Adrenal gland (tissue), 19 donors: ENCODE measurements at regions of chr3 and their contacts with region 1.

Region 1: DNA sequence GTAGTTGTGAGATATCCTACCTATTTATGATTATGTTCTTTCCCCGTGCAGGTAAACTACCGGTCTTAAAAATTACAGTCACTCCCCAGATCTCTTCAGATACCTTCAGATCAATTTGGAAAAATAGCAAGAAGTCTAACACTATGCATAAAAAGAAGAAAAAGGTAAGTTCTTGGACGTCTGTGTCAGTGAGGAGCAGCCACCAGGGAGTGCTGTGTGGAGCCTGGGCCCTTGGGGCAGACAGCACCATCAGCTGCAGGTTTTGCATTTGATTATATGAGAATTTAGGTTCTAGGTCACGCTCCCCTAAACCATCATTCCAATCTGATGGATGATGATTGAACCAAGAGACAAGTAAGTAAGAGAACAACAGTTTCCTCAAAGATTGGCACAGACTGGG is 8.9 kb upstream of the RNF7 start:
- DNase-seq: no peak
- H3K4me3 ChIP-seq: no peak overlapping the region
- H3K27ac ChIP-seq: no peak overlapping the region
- H3K4me1 ChIP-seq: no peaks in the 10 kb centered on the region
- H3K27me3 ChIP-seq: no peaks in the 10 kb centered on the region
- CTCF ChIP-seq: no peak
- POLR2A ChIP-seq: no peak

Region 2: DNA sequence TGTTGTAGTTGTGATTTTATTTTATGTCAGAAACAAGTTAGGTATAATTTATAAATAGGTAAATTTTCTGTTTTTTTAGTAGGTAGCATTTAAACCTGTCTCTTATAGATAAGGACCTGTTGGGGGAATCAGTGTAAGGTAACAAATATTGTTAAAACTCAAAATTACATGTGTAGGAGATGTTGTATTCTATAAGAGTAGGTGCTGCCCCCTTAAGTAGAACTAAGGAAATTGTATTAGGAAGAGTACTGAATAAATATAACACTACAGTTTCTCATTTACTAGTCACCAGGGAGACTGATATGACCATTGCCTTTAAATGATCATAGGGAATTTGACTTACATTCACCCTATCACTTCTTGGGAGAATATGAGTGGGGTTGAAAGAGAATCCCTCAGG is 756.4 kb before region 1 on chr3:
- intact Hi-C with region 1: no loop called
- DNase-seq: no peak
- H3K4me3 ChIP-seq: no peak overlapping the region
- H3K27ac ChIP-seq: no peak overlapping the region
- H3K4me1 ChIP-seq: no peaks in the 10 kb centered on the region
- H3K27me3 ChIP-seq: no peaks in the 10 kb centered on the region
- CTCF ChIP-seq: peak; percentile 6 to 40 (median 25)
- POLR2A ChIP-seq: no peak

Region 3: DNA sequence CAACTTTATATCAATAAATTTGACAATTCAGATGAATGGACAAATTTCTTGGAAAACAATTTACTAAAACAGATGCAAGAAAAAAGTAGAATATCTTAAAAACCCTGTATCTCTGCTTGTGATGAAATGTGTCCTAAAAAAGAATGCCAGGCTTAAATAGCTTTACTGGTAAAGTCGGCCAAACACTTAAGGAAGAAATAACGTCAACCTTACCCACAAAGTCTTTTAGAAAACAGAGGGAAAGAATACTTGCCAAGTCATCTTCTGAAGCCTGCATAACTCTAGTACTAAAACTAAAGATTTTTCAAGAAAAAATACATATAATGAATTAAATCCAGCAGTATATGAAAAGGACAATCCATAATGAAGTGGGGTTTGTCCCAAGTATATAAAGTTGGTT is 131.3 kb before region 1 on chr3:
- intact Hi-C with region 1: loop called in 1 of 2 experiments (anchors 10 kb)
- DNase-seq: no peak
- H3K4me3 ChIP-seq: no peak overlapping the region
- H3K27ac ChIP-seq: no peak overlapping the region
- H3K4me1 ChIP-seq: no peaks in the 10 kb centered on the region
- H3K27me3 ChIP-seq: no peaks in the 10 kb centered on the region
- CTCF ChIP-seq: no peak
- POLR2A ChIP-seq: no peak